ENCODE measurements at regions of chr10 and their contacts with region 1.

Region 1: GRCh38 chr10:25327273-25327672 is 152.5 kb downstream of the GPR158 start:
- DNase-seq: no peak
- H3K4me3 ChIP-seq: no peak overlapping the region
- H3K4me3 Mint-ChIP-seq: no peak overlapping the region
- H3K27ac ChIP-seq: no peak overlapping the region
- H3K27ac Mint-ChIP-seq: no peak overlapping the region
- H3K4me1 ChIP-seq: no peaks in the 10 kb centered on the region
- H3K4me1 Mint-ChIP-seq: no peaks in the 10 kb centered on the region
- H3K27me3 ChIP-seq: no peaks in the 10 kb centered on the region
- H3K27me3 Mint-ChIP-seq: no peaks in the 10 kb centered on the region

Region 2: GRCh38 chr10:25666276-25666675 is 339.0 kb after region 1 on chr10:
- CTCF ChIA-PET with region 1: no interaction called
- POLR2A ChIA-PET with region 1: no interaction called
- intact Hi-C with region 1: loop called (anchors 5 kb)
- DNase-seq: no peak
- H3K4me3 ChIP-seq: no peak overlapping the region
- H3K4me3 Mint-ChIP-seq: no peak overlapping the region
- H3K27ac ChIP-seq: no peak overlapping the region
- H3K27ac Mint-ChIP-seq: no peak overlapping the region
- H3K4me1 ChIP-seq: no peaks in the 10 kb centered on the region
- H3K4me1 Mint-ChIP-seq: no peaks in the 10 kb centered on the region
- H3K27me3 ChIP-seq: no peaks in the 10 kb centered on the region
- H3K27me3 Mint-ChIP-seq: no peaks in the 10 kb centered on the region

Measured in CD4-positive, alpha-beta memory T cell (primary cell).